ENCODE measurements at regions of chr16 and their contacts with region 1.

Region 1: GRCh38 chr16:4506450-4506849 is 30.3 kb downstream of the HMOX2 start:
- DNase-seq: peak; percentile 79
- CTCF ChIP-seq: peak; percentile 89

Region 2: GRCh38 chr16:4487955-4488498 is 18.4 kb before region 1 on chr16:
- CTCF ChIA-PET with region 1: interaction called, 19 read pairs
- POLR2A ChIA-PET with region 1: no interaction called
- DNase-seq: no peak
- CTCF ChIP-seq: no peak

Region 3: GRCh38 chr16:4538350-4539235 is 32.1 kb after region 1 on chr16 and contains the start of gene CDIP1:
- CTCF ChIA-PET with region 1: interaction called, 12 read pairs
- POLR2A ChIA-PET with region 1: no interaction called
- DNase-seq: peak; percentile 96
- CTCF ChIP-seq: no peak

Region 4: DNA sequence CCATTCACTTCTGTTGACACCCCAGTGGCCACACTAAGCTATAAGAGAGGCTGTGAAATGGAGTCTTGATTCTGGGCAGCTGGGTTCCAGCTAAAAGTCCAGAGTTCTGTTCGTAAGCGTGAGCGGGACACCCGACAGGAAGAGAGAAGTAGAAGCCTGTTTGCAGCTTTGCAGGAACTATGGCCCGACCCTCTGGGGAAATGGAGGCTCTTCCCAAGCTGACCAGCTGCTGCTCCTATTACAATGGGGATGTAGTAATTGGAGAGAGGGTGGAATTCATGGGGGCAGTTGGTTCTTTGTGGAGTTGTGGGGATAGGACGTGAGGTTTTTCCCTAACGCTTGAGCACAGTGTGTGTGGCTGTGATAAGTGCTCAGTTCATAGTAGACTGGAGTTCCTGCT is 79.8 kb after region 1 on chr16:
- CTCF ChIA-PET with region 1: interaction called, 39 read pairs
- POLR2A ChIA-PET with region 1: no interaction called
- DNase-seq: no peak
- CTCF ChIP-seq: no peak

Region 5: DNA sequence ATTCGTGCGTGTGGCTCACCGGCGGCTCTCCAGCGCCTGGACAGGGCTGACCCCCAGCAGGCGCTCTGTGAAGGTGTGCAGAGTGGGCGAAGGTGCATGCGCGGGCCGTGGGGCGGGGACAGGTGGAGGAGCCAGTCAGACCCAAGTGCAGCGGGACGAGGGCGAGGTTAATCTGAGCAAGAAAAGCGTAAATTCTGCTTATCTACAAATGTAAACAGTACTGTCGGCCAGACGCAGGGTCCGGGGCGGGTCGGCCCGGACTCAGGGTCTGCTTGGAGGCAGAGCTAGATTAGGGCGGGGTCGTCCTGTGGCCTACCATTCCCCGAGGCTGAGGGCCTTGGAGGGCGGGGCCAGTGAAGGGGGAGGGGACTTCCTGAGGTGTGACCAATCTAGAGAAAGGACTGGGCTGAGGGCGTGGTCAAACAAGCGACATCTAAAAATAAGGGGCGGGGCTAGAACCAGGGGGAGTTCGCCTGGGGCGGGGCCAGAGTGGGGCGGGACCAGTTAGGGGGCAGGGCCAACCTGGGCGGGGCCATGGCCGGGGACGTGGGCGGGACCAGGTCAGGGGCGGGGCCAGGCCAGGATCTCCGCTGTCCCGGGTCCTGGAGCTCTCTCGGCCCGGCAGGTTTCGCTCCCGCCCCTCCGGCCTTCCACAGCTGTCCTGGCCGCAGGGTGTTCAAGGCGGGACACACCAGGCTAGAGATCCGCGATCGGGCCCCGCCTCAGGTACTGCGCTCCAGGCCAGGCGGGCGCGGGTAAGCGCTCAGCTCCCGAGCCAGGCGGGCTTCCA is 451.5 kb after region 1 on chr16 and contains the start of gene SEC14L5:
- CTCF ChIA-PET with region 1: interaction called, 27 read pairs
- POLR2A ChIA-PET with region 1: no interaction called
- DNase-seq: peak; percentile 100
- CTCF ChIP-seq: no peak

Region 6: GRCh38 chr16:4987580-4988374 is 481.3 kb after region 1 on chr16:
- CTCF ChIA-PET with region 1: no interaction called
- POLR2A ChIA-PET with region 1: no interaction called
- DNase-seq: no peak
- CTCF ChIP-seq: no peak